ENCODE measurements at regions of chr2 and their contacts with region 1.

Region 1: GRCh38 chr2:186589612-186590349 is at the start of gene ITGAV:
- DNase-seq: peak; percentile 94 to 97 (median 96)
- ATAC-seq: peak; percentile 91 to 98 (median 97)
- H3K4me3 ChIP-seq: peak within 1 kb of the TSS; percentile 58 to 93 (median 78)
- H3K27ac ChIP-seq: peak within 1 kb of the TSS; percentile 89 to 98 (median 95)
- H3K4me1 ChIP-seq: peaks cover 0 to 42% (median 28%) of the 10 kb centered on the region in 12 donors
- H3K27me3 ChIP-seq: no peaks in the 10 kb centered on the region
- CTCF ChIP-seq: peak in 1 of 12 donors; percentile 22
- POLR2A ChIP-seq: peak in 1 of 2 donors; percentile 94
- total RNA-seq, gene ITGAV: 133 to 358 (median 235) TPM

Region 2: DNA sequence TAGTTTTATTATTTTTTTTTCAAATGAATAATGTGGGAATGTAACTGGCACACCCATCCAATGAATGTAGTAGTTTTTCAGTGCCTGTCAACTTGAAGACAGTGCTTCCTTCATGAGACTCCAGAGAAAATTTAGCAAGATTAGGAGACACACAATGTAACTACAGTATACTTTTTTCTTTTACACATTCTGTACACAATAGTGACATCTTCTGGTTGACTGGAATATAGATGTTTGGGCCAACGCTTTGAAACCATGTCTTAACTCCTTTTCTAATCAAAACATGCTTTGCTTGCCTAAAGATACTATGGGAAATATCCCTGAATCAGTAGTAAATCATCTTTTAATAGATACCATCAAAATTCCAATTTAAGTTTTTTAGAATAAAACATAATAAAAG is 333.2 kb before region 1 on chr2:
- intact Hi-C with region 1: no loop called
- DNase-seq: no peak
- ATAC-seq: peak in 1 of 4 donors; percentile 32
- H3K4me3 ChIP-seq: no peak overlapping the region
- H3K27ac ChIP-seq: no peak overlapping the region
- H3K4me1 ChIP-seq: no peaks in the 10 kb centered on the region
- H3K27me3 ChIP-seq: no peaks in the 10 kb centered on the region
- CTCF ChIP-seq: peak in 11 of 12 donors; percentile 20 to 68 (median 48)
- POLR2A ChIP-seq: no peak

Region 3: DNA sequence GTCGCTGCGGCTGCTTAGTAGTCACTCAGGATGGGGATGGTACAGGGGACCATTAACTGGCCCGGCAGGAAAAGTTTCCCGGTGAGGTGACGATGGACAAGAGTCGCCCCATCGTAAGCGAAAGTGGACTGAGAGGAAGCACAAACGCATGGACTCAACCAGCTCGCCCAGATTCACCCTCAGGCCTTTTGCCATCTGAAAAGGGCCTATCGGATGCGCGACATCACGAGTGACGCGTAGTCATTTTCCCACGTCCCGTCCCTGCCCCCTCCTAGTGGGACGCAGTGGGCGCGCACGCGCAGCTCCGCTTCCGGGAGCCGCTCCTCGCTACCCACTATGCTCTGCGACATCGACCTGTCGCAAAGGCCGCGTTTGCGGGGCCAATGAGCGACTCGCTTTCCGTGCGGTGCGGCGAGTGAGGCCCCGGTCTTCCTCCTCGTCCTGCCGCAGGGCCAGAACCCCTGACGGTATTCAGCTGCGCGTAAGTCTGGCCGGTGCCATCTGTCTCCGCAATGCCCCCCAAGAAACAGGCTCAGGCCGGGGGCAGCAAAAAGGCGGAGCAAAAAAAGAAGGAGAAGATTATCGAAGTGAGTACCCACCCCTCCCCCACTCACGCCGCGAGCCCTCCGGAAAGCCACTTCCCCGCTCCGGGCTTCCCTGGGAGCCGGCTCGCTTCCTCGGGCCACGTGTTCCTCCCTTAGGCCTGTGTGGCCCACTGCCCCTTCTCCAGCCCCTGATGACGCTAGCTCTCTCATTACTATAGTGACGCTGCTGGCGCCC is 103.7 kb before region 1 on chr2 and contains the start of gene ZC3H15:
- intact Hi-C with region 1: loop called in 2 of 10 experiments (anchors 5 to 10 kb)
- DNase-seq: peak; percentile 97 to 99 (median 99)
- ATAC-seq: peak; percentile 99
- H3K4me3 ChIP-seq: peak within 1 kb of the TSS; percentile 80 to 97 (median 88)
- H3K27ac ChIP-seq: peak within 1 kb of the TSS; percentile 74 to 96 (median 92)
- H3K4me1 ChIP-seq: peaks cover 11 to 57% (median 38%) of the 10 kb centered on the region in 12 donors
- H3K27me3 ChIP-seq: no peaks in the 10 kb centered on the region
- CTCF ChIP-seq: no peak
- POLR2A ChIP-seq: peak in 1 of 2 donors; percentile 77
- total RNA-seq, gene ZC3H15: 28.8 to 37.2 (median 30.5) TPM

Region 4: GRCh38 chr2:186496401-186496800 is 93.4 kb before region 1 on chr2:
- intact Hi-C with region 1: loop called in 1 of 10 experiments (anchors 10 kb)
- DNase-seq: no peak
- ATAC-seq: no peak
- H3K4me3 ChIP-seq: no peak overlapping the region
- H3K27ac ChIP-seq: no peak overlapping the region
- H3K4me1 ChIP-seq: peaks cover 3 to 34% (median 20%) of the 10 kb centered on the region in 12 donors
- H3K27me3 ChIP-seq: no peaks in the 10 kb centered on the region
- CTCF ChIP-seq: no peak
- POLR2A ChIP-seq: no peak

Region 5: DNA sequence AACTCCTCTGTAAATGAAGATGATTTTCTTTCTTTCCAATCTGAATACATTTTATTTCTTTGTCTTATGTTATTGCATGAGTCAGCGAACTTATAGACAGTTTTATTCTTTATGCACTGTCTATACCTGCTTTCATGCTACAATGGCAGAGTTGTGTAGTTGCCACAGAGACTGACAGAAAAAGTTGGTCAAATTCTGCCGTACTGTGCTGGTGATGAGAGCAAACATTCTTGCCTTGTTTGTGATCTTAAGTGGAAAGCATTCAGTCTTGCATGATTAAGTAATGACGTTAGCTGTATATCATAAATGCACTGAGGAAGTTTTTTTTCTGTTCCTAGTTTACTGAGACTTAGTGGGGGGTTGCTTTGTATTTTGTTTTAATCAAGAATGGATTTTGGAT is 70.8 kb before region 1 on chr2:
- intact Hi-C with region 1: loop called in 1 of 10 experiments (anchors 10 kb)
- DNase-seq: no peak
- ATAC-seq: no peak
- H3K4me3 ChIP-seq: no peak overlapping the region
- H3K27ac ChIP-seq: no peak overlapping the region
- H3K4me1 ChIP-seq: peaks cover 0 to 9% (median 0%) of the 10 kb centered on the region in 12 donors
- H3K27me3 ChIP-seq: no peaks in the 10 kb centered on the region
- CTCF ChIP-seq: no peak
- POLR2A ChIP-seq: no peak

Region 6: GRCh38 chr2:186641807-186642321 is 52.1 kb after region 1 on chr2:
- intact Hi-C with region 1: loop called in 4 of 10 experiments (anchors 2 to 10 kb)
- DNase-seq: peak in 2 of 5 donors; percentile 28 to 29
- ATAC-seq: peak in 3 of 4 donors; percentile 83 to 87 (median 84)
- H3K4me3 ChIP-seq: no peak overlapping the region
- H3K27ac ChIP-seq: no peak overlapping the region
- H3K4me1 ChIP-seq: peaks cover 0 to 25% (median 0%) of the 10 kb centered on the region in 12 donors
- H3K27me3 ChIP-seq: no peaks in the 10 kb centered on the region
- CTCF ChIP-seq: peak; percentile 61 to 84 (median 70)
- POLR2A ChIP-seq: no peak